HepG2 (cell line): ENCODE measurements at regions of chr1 and their contacts with region 1.

Region 1: GRCh38 chr1:1435106-1435903 is at the start of gene VWA1:
- DNase-seq: no peak
- ATAC-seq: no peak
- H3K4me3 ChIP-seq: peak within 1 kb of the TSS; percentile 72 to 88 (median 84)
- H3K27ac ChIP-seq: peak within 1 kb of the TSS; percentile 94
- H3K4me1 ChIP-seq: peaks cover 53% of the 10 kb centered on the region
- H3K27me3 ChIP-seq: no peaks in the 10 kb centered on the region
- CTCF ChIP-seq: peak; percentile 14; the same call in 1 of the 2 replicates
- EP300 ChIP-seq: no peak
- POLR2A ChIP-seq: no peak; a peak in 1 of 4 replicates
- RAD21 ChIP-seq: no peak
- total RNA-seq, gene VWA1: 25.1 and 57.5 TPM in 2 replicates

Region 2: DNA sequence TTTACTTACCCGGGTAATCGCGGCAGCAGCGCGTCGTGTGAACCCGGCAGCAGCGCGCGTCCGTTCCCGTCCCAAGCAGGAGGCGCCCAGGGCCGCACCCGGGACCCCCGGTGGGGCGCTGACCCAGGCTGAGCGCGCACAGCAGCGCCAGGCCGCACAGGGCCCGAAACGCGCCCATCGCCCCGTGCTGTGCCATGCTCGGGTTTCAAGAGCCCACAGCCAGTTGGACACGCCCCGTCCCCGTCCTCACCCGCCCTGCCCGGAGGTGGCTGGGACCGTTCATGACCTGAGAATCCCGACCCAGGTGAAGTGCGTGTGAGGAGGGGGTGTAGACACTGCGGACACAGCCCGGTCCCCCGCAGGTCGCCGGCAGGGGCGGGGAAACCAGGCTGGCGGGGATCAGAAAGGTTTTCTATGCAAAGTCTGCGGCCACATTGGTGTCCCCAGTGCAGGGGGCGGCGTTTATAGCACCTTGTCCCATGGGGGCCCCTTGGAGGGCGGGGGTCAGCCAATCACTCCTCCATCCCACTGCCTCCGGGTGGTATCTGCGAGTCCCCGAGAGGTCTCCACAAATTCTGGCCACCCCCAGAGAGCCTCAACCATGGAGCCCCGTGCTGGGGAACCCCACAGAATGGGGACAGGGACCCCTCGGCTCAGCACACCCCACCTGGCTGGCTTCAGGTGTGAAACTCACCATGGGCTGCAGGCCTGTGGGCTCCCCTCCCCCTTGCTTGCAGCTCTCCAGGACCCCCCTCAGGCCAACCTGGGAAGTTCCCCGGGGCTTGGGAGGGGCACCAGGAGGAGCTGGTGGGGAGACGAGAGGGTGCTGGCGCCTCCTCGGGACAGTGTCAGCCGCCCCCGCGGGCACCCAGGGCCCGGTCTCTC is 228.7 kb before region 1 on chr1 and contains the start of gene TNFRSF18:
- CTCF ChIA-PET with region 1: no interaction called
- POLR2A ChIA-PET with region 1: no interaction called
- in situ Hi-C with region 1: no loop called
- intact Hi-C with region 1: no loop called
- DNase-seq: no peak
- ATAC-seq: peak; percentile 31
- H3K4me3 ChIP-seq: peak within 1 kb of the TSS in 1 of 3 experiments; percentile 18; a peak in 1 of 6 replicates
- H3K27ac ChIP-seq: no peak within 1 kb of the TSS
- H3K4me1 ChIP-seq: no peaks in the 10 kb centered on the region
- H3K27me3 ChIP-seq: peaks cover 18 to 77% of the 10 kb centered on the region in 2 experiments; a peak in 4 of 5 replicates
- CTCF ChIP-seq: peak; percentile 36; the same call in 1 of the 2 replicates
- EP300 ChIP-seq: no peak
- POLR2A ChIP-seq: no peak
- RAD21 ChIP-seq: no peak
- total RNA-seq, gene TNFRSF18: not detected in 2 replicates

Region 3: DNA sequence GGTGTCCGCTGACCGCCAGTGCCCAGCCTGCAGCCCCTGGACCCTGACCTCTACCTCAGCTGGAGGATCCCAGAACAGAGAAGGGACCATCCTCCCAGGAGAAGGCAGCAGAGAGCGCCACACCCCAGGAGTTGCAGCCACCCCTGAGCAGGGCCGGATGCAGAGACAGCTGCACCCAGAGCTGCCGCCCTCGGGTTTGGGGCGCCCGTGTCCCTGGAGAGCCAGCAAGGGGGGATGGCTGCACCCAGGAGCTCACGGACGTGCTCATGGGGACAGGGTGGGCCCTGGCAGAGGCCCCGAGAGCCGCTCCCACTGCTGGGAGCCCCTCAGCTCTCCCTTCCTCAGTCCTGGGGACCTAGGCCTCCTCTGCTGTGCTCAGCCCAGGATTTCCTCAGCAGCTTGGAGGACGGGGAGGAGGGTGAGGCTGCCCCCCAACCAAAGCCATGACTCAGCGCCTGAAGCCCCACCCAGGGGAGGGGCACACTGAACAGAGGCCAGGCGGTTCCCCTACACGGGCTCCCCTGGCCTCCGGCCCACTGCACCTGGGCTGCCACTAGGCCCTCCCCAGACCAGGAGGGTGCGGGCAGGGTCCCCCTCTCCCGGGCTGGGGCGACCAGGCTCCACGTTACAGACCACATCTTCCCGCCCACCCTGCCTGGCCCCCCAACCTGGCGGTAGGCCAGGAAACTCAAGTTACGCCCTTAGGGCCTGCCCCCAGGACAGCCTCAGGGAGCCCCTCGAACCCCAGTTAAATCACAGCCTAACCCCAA is 129.8 kb before region 1 on chr1:
- CTCF ChIA-PET with region 1: no interaction called
- POLR2A ChIA-PET with region 1: interaction called, 11 read pairs
- in situ Hi-C with region 1: no loop called
- intact Hi-C with region 1: no loop called
- DNase-seq: peak; percentile 74
- ATAC-seq: peak; percentile 45
- H3K4me3 ChIP-seq: peak overlapping the region; percentile 77 to 93 (median 91)
- H3K27ac ChIP-seq: peak overlapping the region; percentile 79
- H3K4me1 ChIP-seq: peaks cover 41% of the 10 kb centered on the region
- H3K27me3 ChIP-seq: no peaks in the 10 kb centered on the region
- CTCF ChIP-seq: peak; percentile 66
- EP300 ChIP-seq: peak in 1 of 2 experiments; percentile 20; a peak in 1 of 4 replicates
- POLR2A ChIP-seq: 0 out of 4 replicates have a peak, but pooled peaks of 1 of the 2 experiments have one; percentile 30
- RAD21 ChIP-seq: no peak

Region 4: GRCh38 chr1:1349256-1350012 is 85.9 kb before region 1 on chr1 and contains the start of gene DVL1:
- CTCF ChIA-PET with region 1: no interaction called
- POLR2A ChIA-PET with region 1: interaction called, 20 read pairs
- in situ Hi-C with region 1: no loop called
- intact Hi-C with region 1: no loop called
- DNase-seq: no peak
- ATAC-seq: 0 out of 3 replicates have a peak, but pooled peaks have one; percentile 3
- H3K4me3 ChIP-seq: peak within 1 kb of the TSS; percentile 79 to 90 (median 85)
- H3K27ac ChIP-seq: peak within 1 kb of the TSS; percentile 82
- H3K4me1 ChIP-seq: peaks cover 49% of the 10 kb centered on the region
- H3K27me3 ChIP-seq: no peaks in the 10 kb centered on the region
- CTCF ChIP-seq: peak; percentile 78
- EP300 ChIP-seq: no peak
- POLR2A ChIP-seq: no peak
- RAD21 ChIP-seq: peak; percentile 58
- total RNA-seq, gene DVL1: 42.8 and 60.4 TPM in 2 replicates

Region 5: DNA sequence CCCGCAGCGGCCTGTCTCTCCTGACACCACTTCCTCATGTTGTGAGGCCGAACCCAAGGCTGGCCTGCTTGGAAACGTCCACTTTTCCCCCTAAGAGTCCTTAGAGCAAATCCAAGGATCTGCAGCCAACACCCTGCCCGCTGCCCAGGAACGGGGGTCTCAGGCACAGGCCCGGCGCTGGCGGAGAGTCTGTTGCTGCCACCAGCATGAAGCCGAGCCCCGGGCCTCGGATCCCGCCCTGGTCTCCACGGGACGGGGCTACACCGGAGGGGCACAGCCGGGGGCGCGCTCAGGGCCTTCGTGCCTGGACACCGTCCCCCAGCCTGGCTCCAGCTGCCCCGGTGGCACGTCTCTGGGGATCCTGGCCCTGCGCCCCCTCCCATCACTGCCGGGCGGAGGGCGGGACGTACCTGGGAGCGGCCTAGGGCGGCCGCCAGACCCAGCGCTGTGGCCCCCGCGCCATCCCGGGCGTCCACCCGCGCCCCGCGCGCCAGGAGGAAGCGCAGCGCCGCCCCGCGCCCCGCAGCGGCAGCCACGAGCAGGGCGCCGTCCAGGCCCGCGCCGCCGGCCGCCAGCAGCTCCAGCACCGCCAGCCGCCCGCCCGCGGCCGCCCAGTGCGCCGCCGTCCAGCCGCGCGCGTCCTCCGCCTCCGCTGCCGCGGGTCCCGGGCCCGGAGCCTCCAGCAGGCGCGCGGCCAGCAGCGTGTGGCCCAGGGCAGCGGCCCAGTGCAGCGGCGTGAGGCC is 15.5 kb before region 1 on chr1:
- CTCF ChIA-PET with region 1: interaction called, 3 read pairs
- POLR2A ChIA-PET with region 1: interaction called, 126 read pairs
- in situ Hi-C with region 1: no loop called
- intact Hi-C with region 1: no loop called
- DNase-seq: no peak
- ATAC-seq: peak; percentile 12; the same call in 1 of the 3 replicates
- H3K4me3 ChIP-seq: peak overlapping the region; percentile 37 to 74 (median 70); a peak in 5 of 6 replicates
- H3K27ac ChIP-seq: peak overlapping the region; percentile 44
- H3K4me1 ChIP-seq: peaks cover 67% of the 10 kb centered on the region
- H3K27me3 ChIP-seq: no peaks in the 10 kb centered on the region; a peak in 1 of 5 replicates
- CTCF ChIP-seq: no peak
- EP300 ChIP-seq: no peak
- POLR2A ChIP-seq: no peak
- RAD21 ChIP-seq: no peak

Region 6: GRCh38 chr1:1462318-1462966 is 27.1 kb after region 1 on chr1:
- CTCF ChIA-PET with region 1: no interaction called
- POLR2A ChIA-PET with region 1: interaction called, 11 read pairs
- in situ Hi-C with region 1: no loop called
- intact Hi-C with region 1: no loop called
- DNase-seq: peak; percentile 51
- ATAC-seq: peak; percentile 87
- H3K4me3 ChIP-seq: peak overlapping the region; percentile 33 to 71 (median 49); a peak in 5 of 6 replicates
- H3K27ac ChIP-seq: no peak overlapping the region
- H3K4me1 ChIP-seq: peaks cover 37% of the 10 kb centered on the region
- H3K27me3 ChIP-seq: peaks cover 6 to 16% of the 10 kb centered on the region in 2 experiments; a peak in 4 of 5 replicates
- CTCF ChIP-seq: no peak
- EP300 ChIP-seq: no peak
- POLR2A ChIP-seq: peak in 1 of 2 experiments; percentile 40; a peak in 1 of 4 replicates
- RAD21 ChIP-seq: no peak

Region 7: GRCh38 chr1:1477206-1477605 is 41.9 kb after region 1 on chr1:
- CTCF ChIA-PET with region 1: no interaction called
- POLR2A ChIA-PET with region 1: no interaction called
- in situ Hi-C with region 1: no loop called
- intact Hi-C with region 1: no loop called
- DNase-seq: no peak
- ATAC-seq: no peak
- H3K4me3 ChIP-seq: no peak overlapping the region
- H3K27ac ChIP-seq: no peak overlapping the region
- H3K4me1 ChIP-seq: peaks cover 13% of the 10 kb centered on the region
- H3K27me3 ChIP-seq: no peaks in the 10 kb centered on the region
- CTCF ChIP-seq: no peak
- EP300 ChIP-seq: no peak
- POLR2A ChIP-seq: no peak
- RAD21 ChIP-seq: no peak

Region 8: DNA sequence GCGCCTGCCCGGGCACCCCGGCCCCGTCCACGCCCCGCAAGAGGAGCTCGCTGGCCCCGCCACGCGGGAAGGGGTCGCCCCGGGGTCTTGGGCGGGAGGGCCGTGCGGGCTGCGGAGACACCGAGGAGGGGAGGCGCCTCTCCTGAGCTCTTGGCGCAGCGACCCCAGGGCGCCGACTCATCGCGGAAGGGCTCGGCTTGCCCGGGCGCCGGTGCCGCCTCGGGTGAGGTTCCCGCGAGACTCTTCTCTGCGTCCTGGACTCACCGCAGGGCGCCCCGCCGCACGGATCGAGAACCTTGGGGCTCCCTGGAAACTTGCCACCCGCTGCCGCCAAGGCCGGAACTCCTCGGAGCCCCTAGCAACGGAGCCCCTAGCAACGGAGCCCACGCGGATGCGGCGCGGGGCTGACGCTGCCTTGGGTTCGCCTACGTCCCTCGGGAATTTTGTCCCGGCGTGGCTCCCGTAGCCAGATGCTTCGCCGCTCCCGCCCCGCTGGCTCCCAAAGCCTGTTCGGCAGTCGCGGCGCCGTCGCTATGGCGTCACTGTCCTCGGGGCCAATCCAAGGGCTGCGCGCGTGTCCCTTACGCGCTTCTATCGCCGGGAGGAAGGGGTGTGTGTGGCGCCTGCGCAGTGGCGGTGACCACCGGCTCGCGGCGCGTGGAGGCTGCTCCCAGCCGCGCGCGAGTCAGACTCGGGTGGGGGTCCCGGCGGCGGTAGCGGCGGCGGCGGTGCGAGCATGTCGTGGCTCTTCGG is 76.4 kb after region 1 on chr1 and contains the start of gene ATAD3A:
- CTCF ChIA-PET with region 1: no interaction called
- POLR2A ChIA-PET with region 1: interaction called, 40 read pairs
- in situ Hi-C with region 1: no loop called
- intact Hi-C with region 1: no loop called
- DNase-seq: peak; percentile 93
- ATAC-seq: peak; percentile 82
- H3K4me3 ChIP-seq: peak within 1 kb of the TSS; percentile 79 to 91 (median 79)
- H3K27ac ChIP-seq: peak within 1 kb of the TSS; percentile 90
- H3K4me1 ChIP-seq: peaks cover 12% of the 10 kb centered on the region
- H3K27me3 ChIP-seq: no peaks in the 10 kb centered on the region
- CTCF ChIP-seq: no peak; the same call in none of the 2 replicates
- EP300 ChIP-seq: no peak
- POLR2A ChIP-seq: peak; percentile 63 to 78
- RAD21 ChIP-seq: 0 out of 2 replicates have a peak, but pooled peaks have one; percentile 8
- total RNA-seq, gene ATAD3A: 33.4 and 49.0 TPM in 2 replicates